ENCODE measurements at regions of chr4 and their contacts with region 1.

Region 1: DNA sequence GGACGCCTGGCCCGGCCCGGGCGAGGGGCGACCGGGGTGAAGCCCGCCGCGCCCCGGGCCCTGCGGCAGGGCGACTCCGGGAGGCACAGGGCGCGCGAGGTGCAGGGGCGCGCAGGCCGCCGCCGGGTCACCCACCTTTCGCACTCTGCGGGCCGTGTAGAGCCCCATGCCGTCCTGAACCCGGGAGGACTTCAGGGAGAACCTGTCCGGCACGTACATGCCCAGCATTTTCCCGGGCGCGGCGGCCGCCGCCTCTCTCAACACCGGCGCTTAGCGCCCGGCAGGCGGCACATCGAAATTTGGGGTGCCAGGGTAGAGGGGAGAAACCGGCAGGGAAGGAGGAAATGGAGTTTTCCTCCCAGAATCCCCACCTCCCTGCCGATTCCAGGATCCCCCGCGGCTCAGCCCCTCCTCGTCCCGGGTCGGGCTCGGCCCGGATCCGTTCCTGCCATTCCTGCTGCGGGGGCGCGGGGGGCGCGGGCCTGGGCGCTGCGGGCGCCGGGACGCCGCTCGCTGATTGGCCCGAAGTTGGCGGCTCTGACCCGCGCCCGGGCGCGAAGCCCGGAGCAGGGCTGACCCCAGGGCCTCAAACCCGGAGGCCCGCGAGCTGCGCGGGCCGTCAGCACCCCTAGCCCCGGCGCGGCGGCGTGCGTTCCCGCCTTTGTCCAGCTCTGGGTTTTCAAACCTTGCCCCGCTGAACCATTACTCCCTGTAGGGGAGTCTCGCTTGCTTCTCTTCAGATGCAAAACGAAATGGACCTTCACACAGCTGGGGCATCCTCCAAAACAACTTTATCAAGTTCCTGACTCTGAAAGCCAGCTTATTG is at the start of gene PRDM5:
- DNase-seq: peak; percentile 6 to 37 (median 22)
- ATAC-seq: peak; percentile 67
- H3K4me3 ChIP-seq: peak within 1 kb of the TSS; percentile 72
- H3K4me3 Mint-ChIP-seq: peak within 1 kb of the TSS; percentile 82 to 98 (median 96)
- H3K27ac ChIP-seq: peak within 1 kb of the TSS; percentile 18
- H3K27ac Mint-ChIP-seq: peak within 1 kb of the TSS in 8 of 9 donors; percentile 75 to 93 (median 82)
- H3K4me1 ChIP-seq: peaks cover 0 to 5% of the 10 kb centered on the region in 2 donors
- H3K4me1 Mint-ChIP-seq: peaks cover 8 to 16% (median 13%) of the 10 kb centered on the region in 7 donors
- H3K27me3 ChIP-seq: no peaks in the 10 kb centered on the region
- H3K27me3 Mint-ChIP-seq: peaks cover 0 to 69% (median 0%) of the 10 kb centered on the region in 5 donors
- total RNA-seq, gene PRDM5: 0.29 to 1.1 (median 0.72) TPM in 4 of 5 experiments, not detected in the other

Region 2: DNA sequence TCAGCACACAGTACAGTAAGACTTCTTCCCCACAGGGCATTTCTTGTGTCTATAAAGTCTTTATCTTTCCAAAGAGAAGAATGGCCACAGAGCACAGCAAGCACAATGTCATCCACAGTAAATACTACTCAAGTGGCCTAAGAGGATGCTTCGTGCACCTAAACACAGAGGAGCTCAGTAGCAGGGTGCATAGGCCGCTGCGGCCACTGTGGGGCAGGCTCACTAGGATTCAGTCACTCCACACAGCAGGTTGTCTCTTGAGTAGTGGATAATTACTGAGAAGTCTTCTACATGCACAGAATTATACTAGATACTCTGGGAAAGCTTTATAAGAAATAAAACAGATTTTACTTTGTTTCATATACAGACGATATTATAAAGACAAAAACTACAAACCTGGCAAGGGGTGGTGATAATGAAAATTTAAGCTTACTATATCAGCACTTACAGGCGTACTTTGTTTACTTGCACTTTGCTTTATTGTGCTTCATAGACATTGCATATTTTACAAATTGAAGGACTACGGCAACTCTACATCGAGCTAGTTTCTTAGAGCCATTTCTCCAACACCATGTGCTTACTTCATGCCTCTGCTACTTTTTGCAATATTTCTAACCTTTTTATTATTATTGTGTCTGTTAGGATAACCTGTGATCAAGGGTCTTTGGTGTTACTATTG is 78.6 kb before region 1 on chr4:
- CTCF ChIA-PET with region 1: no interaction called
- POLR2A ChIA-PET with region 1: no interaction called
- intact Hi-C with region 1: no loop called
- DNase-seq: peak in 3 of 9 donors; percentile 4 to 5 (median 5)
- ATAC-seq: peak; percentile 46
- H3K4me3 ChIP-seq: no peak overlapping the region
- H3K4me3 Mint-ChIP-seq: no peak overlapping the region
- H3K27ac ChIP-seq: no peak overlapping the region
- H3K27ac Mint-ChIP-seq: no peak overlapping the region
- H3K4me1 ChIP-seq: no peaks in the 10 kb centered on the region
- H3K4me1 Mint-ChIP-seq: peaks cover 2 to 8% (median 5%) of the 10 kb centered on the region in 7 donors
- H3K27me3 ChIP-seq: no peaks in the 10 kb centered on the region
- H3K27me3 Mint-ChIP-seq: peaks cover 0 to 12% (median 3%) of the 10 kb centered on the region in 5 donors

Region 3: GRCh38 chr4:121072224-121073003 is 149.8 kb after region 1 on chr4 and contains the start of gene NDNF:
- CTCF ChIA-PET with region 1: no interaction called
- POLR2A ChIA-PET with region 1: no interaction called
- intact Hi-C with region 1: loop called (anchors 2 to 10 kb)
- DNase-seq: peak; percentile 13 to 76 (median 33)
- ATAC-seq: peak; percentile 71
- H3K4me3 ChIP-seq: peak within 1 kb of the TSS; percentile 64
- H3K4me3 Mint-ChIP-seq: peak within 1 kb of the TSS; percentile 83 to 95 (median 90)
- H3K27ac ChIP-seq: no peak within 1 kb of the TSS
- H3K27ac Mint-ChIP-seq: peak within 1 kb of the TSS in 5 of 9 donors; percentile 8 to 65 (median 51)
- H3K4me1 ChIP-seq: peaks cover 0 to 6% of the 10 kb centered on the region in 2 donors
- H3K4me1 Mint-ChIP-seq: peaks cover 20 to 37% (median 23%) of the 10 kb centered on the region in 7 donors
- H3K27me3 ChIP-seq: peaks cover 10% of the 10 kb centered on the region in 2 donors
- H3K27me3 Mint-ChIP-seq: peaks cover 45 to 75% (median 60%) of the 10 kb centered on the region in 5 donors
- total RNA-seq, gene NDNF: not detected